ENCODE measurements at regions of chr12 and their contacts with region 1.

Region 1: DNA sequence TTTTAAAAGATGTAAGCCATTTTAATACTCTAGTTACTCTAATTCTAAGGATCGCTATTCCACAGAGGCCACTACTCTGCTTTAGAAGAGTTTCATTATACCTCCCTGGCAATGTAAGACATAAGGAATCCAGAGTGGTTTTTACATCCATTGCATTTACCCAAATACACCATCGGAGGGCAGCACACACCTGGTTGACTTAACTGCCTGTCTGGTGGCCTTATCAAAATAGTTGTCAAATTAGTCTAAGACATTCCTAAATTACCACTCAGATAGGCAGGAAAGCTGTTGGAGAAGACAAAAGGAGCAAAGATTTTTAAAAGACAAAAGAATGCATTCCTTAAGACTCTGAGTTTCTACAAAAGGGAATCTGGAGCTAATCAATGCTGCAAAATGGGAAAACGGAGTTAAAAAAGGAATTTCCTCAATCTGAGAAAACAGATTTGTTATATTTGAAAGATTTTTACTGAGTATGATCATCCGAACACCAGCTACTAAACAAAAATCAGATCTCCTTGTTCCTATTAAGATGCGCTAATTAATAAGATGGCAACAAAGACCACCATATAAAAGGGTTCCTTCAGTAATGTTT is 33.8 kb upstream of the FGD4 start:
- H3K4me3 Mint-ChIP-seq: no peak overlapping the region
- H3K27ac Mint-ChIP-seq: no peak overlapping the region
- H3K4me1 Mint-ChIP-seq: no peaks in the 10 kb centered on the region
- H3K27me3 Mint-ChIP-seq: no peaks in the 10 kb centered on the region

Region 2: DNA sequence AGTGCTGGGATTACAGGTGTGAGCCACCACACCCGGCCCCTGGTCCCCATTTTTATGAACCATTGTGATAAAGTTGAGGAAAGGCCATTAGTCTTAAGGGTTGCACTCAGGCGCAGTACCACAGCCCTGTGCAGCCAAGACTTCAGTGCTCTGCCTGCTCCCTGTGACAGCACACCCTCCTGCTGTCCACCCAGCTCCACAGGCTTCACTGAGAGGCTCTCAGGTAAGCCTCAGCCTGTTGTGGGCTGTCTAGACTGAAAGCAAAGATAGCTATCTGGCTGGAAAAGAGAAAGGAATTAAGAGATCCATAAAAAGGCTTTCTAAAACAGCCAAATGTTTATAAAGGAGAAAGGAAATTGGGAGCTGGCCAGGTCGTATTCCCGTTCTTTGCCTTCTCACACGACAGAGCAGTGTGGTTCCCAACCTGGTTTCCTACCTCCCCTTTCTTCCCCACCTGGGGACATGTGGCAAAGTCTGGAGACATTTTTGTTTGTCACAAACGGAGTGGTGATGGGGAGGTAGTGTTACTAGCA is 294.4 kb after region 1 on chr12:
- intact Hi-C with region 1: loop called (anchors 2 kb)
- H3K4me3 Mint-ChIP-seq: no peak overlapping the region
- H3K27ac Mint-ChIP-seq: no peak overlapping the region
- H3K4me1 Mint-ChIP-seq: peaks cover 5% of the 10 kb centered on the region
- H3K27me3 Mint-ChIP-seq: no peaks in the 10 kb centered on the region

Region 3: DNA sequence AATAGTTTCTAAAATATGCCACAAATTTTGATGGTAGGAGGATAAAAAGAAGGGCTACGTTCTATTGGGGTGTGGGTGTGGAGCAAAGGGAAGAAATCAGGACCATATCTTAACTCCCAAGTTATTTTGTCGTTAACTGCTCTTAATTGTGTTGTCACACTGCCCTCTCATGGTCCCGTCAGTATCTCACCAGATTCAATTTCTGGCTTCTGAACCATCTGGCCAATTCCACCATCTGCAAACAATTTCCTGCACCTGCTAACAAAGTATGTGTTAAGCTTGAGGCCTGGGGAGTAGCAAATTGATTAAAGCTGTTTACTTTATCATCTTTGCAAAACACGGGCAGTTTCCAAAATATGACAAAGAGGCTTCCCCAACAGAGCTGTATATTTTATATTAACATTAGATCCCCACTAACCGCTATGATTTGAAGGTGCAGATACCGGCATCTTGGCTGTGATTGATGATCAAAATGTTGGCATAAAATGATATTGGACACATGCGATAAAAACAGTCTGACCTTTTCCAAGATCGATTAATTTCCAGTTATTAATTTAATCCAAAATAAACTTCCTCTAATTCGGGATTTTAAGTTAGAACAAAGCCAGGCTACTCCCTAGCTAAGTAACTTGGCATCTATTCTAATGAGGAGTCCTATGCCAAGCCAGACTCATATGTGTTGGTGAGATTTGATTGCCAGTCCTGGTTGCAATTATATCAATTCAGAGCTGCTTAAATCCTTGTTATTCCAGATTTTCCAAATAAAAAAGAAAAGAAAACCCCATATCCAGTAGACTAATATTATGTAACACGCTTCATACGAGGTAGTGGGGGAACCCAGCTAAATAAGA is 306.6 kb after region 1 on chr12:
- intact Hi-C with region 1: loop called (anchors 1 kb)
- H3K4me3 Mint-ChIP-seq: no peak overlapping the region
- H3K27ac Mint-ChIP-seq: no peak overlapping the region
- H3K4me1 Mint-ChIP-seq: peaks cover 21% of the 10 kb centered on the region
- H3K27me3 Mint-ChIP-seq: no peaks in the 10 kb centered on the region